ENCODE measurements at regions of chr1 and their contacts with region 1.

Region 1: DNA sequence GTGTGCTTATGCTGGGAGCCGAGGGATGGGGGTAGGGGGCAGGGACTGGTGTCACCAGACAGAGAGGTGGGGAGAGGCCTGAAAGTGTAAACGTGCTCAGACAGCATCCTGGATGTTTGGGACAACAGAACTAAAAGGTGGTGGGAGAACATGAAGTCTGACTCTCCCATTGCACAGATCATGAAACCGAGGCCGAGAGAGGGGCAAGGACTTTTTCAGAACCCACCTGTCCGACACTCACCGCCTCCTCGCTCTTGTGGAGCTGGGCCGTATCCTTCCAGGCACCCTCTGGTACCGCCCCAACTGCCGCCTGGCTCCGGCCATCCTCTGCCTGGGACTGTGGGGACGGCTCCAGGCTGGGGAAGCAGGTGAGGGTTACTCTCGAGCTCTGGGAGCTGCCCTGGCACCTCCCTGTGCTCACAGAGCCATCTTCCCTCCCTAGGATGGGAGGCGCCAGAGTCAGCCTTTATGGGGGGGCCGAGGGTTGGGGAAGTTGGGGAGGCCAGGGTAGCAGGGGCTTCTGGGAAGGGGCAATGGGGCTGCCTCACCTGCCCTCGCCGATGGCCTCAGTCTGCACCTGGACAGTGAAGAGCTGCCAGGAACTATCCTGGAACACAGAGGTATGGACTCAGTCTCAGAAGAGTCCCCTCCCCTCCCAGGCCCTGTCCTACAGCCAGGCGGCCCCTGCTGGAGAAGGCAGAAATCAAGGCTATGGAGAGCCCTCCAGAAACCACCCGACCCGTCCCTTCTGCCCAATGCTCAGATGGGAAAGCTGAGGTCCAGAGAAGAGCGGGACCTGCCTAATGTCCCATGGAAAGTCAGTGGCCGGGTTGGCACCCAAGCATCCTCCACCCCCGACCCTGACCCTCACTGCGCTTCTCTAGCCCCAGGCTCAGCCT is 7.0 kb downstream of the ATP13A2 start:
- DNase-seq: no peak
- H3K4me3 Mint-ChIP-seq: no peak overlapping the region
- H3K27ac Mint-ChIP-seq: no peak overlapping the region
- H3K4me1 Mint-ChIP-seq: peaks cover 4% of the 10 kb centered on the region
- H3K27me3 Mint-ChIP-seq: no peaks in the 10 kb centered on the region

Region 2: GRCh38 chr1:16989676-16990391 is 14.9 kb before region 1 on chr1:
- CTCF ChIA-PET with region 1: interaction called, 11 read pairs
- POLR2A ChIA-PET with region 1: no interaction called
- DNase-seq: no peak
- H3K4me3 Mint-ChIP-seq: no peak overlapping the region
- H3K27ac Mint-ChIP-seq: no peak overlapping the region
- H3K4me1 Mint-ChIP-seq: no peaks in the 10 kb centered on the region
- H3K27me3 Mint-ChIP-seq: no peaks in the 10 kb centered on the region